Heart left ventricle (tissue), 16 donors: ENCODE measurements at regions of chr9 and their contacts with region 1.

Region 1: GRCh38 chr9:127869310-127870152 is 7.9 kb downstream of the AK1 start:
- DNase-seq: peak; percentile 90 to 96 (median 91)
- ATAC-seq: peak; percentile 64 to 80 (median 68)
- H3K4me3 ChIP-seq: no peak overlapping the region
- H3K27ac ChIP-seq: peak overlapping the region in 10 of 12 donors; percentile 27 to 88 (median 58)
- H3K4me1 ChIP-seq: peaks cover 0 to 55% (median 37%) of the 10 kb centered on the region in 12 donors
- H3K27me3 ChIP-seq: no peaks in the 10 kb centered on the region
- CTCF ChIP-seq: peak; percentile 85 to 94 (median 88)
- POLR2A ChIP-seq: no peak

Region 2: DNA sequence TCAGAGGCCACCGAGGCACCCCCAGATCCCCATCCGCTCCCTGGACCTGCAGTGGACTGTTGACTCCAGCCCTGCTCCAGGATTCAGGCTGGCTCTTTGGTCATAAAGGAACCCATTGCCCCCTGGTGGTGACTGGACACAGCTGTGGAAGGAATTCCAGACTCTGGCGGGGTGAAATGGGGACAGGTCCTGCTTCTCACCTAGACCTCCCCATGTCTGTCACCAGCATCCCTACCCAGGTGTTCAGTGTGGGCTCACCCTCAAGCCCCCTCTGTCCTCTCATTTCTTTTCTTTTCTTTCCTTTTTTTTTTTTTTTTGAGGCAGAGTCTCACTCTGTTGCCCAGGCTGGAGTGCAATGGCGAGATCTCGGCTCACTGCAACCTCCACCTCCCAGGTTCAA is 283.0 kb before region 1 on chr9:
- intact Hi-C with region 1: loop called in 2 of 10 experiments (anchors 5 kb)
- DNase-seq: peak; percentile 81 to 90 (median 83)
- ATAC-seq: peak; percentile 82 to 94 (median 92)
- H3K4me3 ChIP-seq: no peak overlapping the region
- H3K27ac ChIP-seq: no peak overlapping the region
- H3K4me1 ChIP-seq: peaks cover 0 to 6% (median 0%) of the 10 kb centered on the region in 12 donors
- H3K27me3 ChIP-seq: no peaks in the 10 kb centered on the region
- CTCF ChIP-seq: peak; percentile 80 to 91 (median 86)
- POLR2A ChIP-seq: no peak

Region 3: DNA sequence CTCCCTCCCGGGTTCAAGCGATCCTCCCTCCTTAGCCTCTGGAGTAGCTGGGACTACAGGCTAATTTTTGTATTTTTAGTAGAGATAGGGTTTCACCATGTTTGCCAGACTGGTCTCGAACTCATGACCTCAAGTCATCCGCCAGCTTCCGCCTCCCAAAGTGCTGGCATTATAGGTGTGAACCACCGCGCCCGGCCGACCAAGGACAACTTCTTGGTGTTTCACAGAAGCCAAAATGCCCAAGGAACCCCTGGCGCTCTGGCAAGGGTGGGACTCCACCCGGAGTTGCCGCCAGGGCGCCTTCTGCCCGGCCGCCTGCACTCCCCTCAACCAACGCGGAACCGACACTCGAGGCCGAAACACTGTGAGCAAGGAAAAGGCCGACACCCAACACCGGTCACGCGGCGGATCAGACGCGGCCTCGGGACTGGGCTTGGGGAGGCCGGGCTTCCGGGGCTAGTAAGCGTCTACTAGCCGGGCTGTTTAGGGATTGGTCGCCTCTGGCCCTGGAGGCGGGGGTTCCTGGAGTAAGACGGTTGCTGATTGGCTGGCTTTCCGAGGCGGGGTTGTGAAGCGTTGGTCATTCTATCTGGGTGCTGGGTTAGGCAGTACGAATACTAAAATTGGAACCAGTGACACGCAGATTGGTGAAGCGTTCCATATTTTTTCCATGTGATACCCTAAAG is 170.4 kb before region 1 on chr9:
- intact Hi-C with region 1: no loop called
- DNase-seq: peak; percentile 97 to 99 (median 98)
- ATAC-seq: peak; percentile 99
- H3K4me3 ChIP-seq: peak overlapping the region in 9 of 12 donors; percentile 23 to 49 (median 38)
- H3K27ac ChIP-seq: peak overlapping the region; percentile 26 to 92 (median 87)
- H3K4me1 ChIP-seq: peaks cover 0 to 14% (median 8%) of the 10 kb centered on the region in 12 donors
- H3K27me3 ChIP-seq: no peaks in the 10 kb centered on the region
- CTCF ChIP-seq: peak in 4 of 12 donors; percentile 16 to 29 (median 24)
- POLR2A ChIP-seq: peak in 1 of 2 donors; percentile 67

Region 4: GRCh38 chr9:127802576-127803443 is 66.7 kb before region 1 on chr9 and contains the start of gene FPGS:
- intact Hi-C with region 1: loop called in 5 of 10 experiments (anchors 5 kb)
- DNase-seq: peak; percentile 92 to 95 (median 93)
- ATAC-seq: peak; percentile 80 to 94 (median 92)
- H3K4me3 ChIP-seq: peak within 1 kb of the TSS; percentile 51 to 87 (median 76)
- H3K27ac ChIP-seq: peak within 1 kb of the TSS; percentile 86 to 97 (median 95)
- H3K4me1 ChIP-seq: peaks cover 5 to 32% (median 19%) of the 10 kb centered on the region in 12 donors
- H3K27me3 ChIP-seq: no peaks in the 10 kb centered on the region
- CTCF ChIP-seq: no peak
- POLR2A ChIP-seq: peak in 1 of 2 donors; percentile 53
- total RNA-seq, gene FPGS: 39.9 to 55.1 (median 41.5) TPM

Region 5: GRCh38 chr9:127828262-127829031 is 41.1 kb before region 1 on chr9:
- intact Hi-C with region 1: loop called in 6 of 10 experiments (anchors 2 to 5 kb)
- DNase-seq: peak; percentile 92 to 95 (median 93)
- ATAC-seq: peak; percentile 79 to 90 (median 86)
- H3K4me3 ChIP-seq: peak overlapping the region in 10 of 12 donors; percentile 15 to 44 (median 27)
- H3K27ac ChIP-seq: peak overlapping the region; percentile 68 to 96 (median 80)
- H3K4me1 ChIP-seq: peaks cover 12 to 84% (median 61%) of the 10 kb centered on the region in 12 donors
- H3K27me3 ChIP-seq: no peaks in the 10 kb centered on the region
- CTCF ChIP-seq: peak in 3 of 12 donors; percentile 19 to 33 (median 22)
- POLR2A ChIP-seq: peak in 1 of 2 donors; percentile 87

Region 6: GRCh38 chr9:127910613-127911205 is 41.2 kb after region 1 on chr9:
- intact Hi-C with region 1: loop called in 3 of 10 experiments (anchors 5 kb)
- DNase-seq: peak in 1 of 5 donors; percentile 25
- ATAC-seq: no peak
- H3K4me3 ChIP-seq: no peak overlapping the region
- H3K27ac ChIP-seq: no peak overlapping the region
- H3K4me1 ChIP-seq: peaks cover 0 to 28% (median 20%) of the 10 kb centered on the region in 12 donors
- H3K27me3 ChIP-seq: no peaks in the 10 kb centered on the region
- CTCF ChIP-seq: peak in 1 of 12 donors; percentile 9
- POLR2A ChIP-seq: no peak